ENCODE measurements at regions of chr6 and their contacts with region 1.

Region 1: GRCh38 chr6:45922728-45923351 is 92.8 kb downstream of the CLIC5 start:
- DNase-seq: peak; percentile 67
- ATAC-seq: peak; percentile 70
- H3K4me3 ChIP-seq: no peak overlapping the region
- H3K4me3 Mint-ChIP-seq: no peak overlapping the region
- H3K27ac ChIP-seq: no peak overlapping the region
- H3K27ac Mint-ChIP-seq: no peak overlapping the region
- H3K4me1 ChIP-seq: no peaks in the 10 kb centered on the region
- H3K4me1 Mint-ChIP-seq: peaks cover 3% of the 10 kb centered on the region
- H3K27me3 ChIP-seq: no peaks in the 10 kb centered on the region
- H3K27me3 Mint-ChIP-seq: peaks cover 9% of the 10 kb centered on the region
- CTCF ChIP-seq: peak; percentile 78

Region 2: GRCh38 chr6:44593539-44593944 is 1329.3 kb before region 1 on chr6:
- CTCF ChIA-PET with region 1: interaction called, 14 read pairs
- POLR2A ChIA-PET with region 1: no interaction called
- intact Hi-C with region 1: no loop called
- DNase-seq: peak; percentile 45
- ATAC-seq: no peak
- H3K4me3 ChIP-seq: no peak overlapping the region
- H3K4me3 Mint-ChIP-seq: no peak overlapping the region
- H3K27ac ChIP-seq: no peak overlapping the region
- H3K27ac Mint-ChIP-seq: no peak overlapping the region
- H3K4me1 ChIP-seq: no peaks in the 10 kb centered on the region
- H3K4me1 Mint-ChIP-seq: no peaks in the 10 kb centered on the region
- H3K27me3 ChIP-seq: peaks cover 0 to 4% (median 1%) of the 10 kb centered on the region in 4 experiments
- H3K27me3 Mint-ChIP-seq: peaks cover 24% of the 10 kb centered on the region
- CTCF ChIP-seq: peak; percentile 58

Region 3: DNA sequence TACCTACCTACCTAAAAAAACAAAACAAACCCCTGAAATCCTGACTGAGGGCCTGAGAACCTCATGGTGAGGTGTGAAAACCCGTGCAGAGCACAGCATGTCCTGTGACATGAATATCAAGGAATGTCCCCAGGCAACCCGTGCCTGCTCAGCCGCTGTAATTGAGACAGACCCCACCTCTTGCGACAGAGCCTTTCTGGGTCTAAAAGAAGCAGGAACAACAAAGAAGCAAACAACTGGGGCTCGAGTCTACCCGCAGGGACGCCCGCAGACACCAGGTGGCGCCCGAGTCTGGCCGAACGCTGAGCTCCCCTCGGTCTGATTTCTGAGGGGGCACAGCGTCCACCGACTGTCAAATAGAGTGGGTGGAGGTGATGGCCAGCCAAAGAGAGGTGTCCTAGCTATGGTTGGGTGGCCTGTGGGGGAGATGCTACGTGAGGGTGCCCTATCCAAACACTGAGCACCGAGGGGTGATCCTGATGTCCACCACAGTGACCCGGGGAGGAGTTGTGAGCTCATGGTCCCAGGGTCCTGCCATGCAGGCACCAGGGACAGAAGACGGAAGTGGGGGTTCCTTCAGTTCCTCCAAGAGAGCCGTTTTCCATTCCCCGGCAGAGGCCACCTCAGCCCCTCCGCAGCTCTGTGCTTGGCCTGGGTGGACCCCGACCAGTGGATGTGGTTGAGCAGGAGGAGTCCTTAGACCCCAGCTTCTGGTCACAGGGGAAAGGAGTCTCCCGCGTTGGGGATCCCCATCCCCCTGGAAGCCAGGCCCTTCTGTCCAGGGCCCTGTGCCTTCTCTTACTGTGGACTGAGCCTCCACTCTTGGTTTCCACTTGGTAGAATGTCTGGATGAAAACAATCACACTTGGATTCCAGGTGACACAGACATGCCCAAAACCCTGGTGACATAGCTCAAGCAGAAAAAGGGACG is 1267.2 kb before region 1 on chr6:
- CTCF ChIA-PET with region 1: interaction called, 334 read pairs
- POLR2A ChIA-PET with region 1: no interaction called
- intact Hi-C with region 1: no loop called
- DNase-seq: peak; percentile 66
- ATAC-seq: peak; percentile 51
- H3K4me3 ChIP-seq: no peak overlapping the region
- H3K4me3 Mint-ChIP-seq: no peak overlapping the region
- H3K27ac ChIP-seq: no peak overlapping the region
- H3K27ac Mint-ChIP-seq: no peak overlapping the region
- H3K4me1 ChIP-seq: no peaks in the 10 kb centered on the region
- H3K4me1 Mint-ChIP-seq: peaks cover 5% of the 10 kb centered on the region
- H3K27me3 ChIP-seq: peaks cover 0 to 13% (median 6%) of the 10 kb centered on the region in 4 experiments
- H3K27me3 Mint-ChIP-seq: peaks cover 39% of the 10 kb centered on the region
- CTCF ChIP-seq: peak; percentile 94

Region 4: GRCh38 chr6:45714741-45715507 is 207.9 kb before region 1 on chr6:
- CTCF ChIA-PET with region 1: interaction called, 13 read pairs
- POLR2A ChIA-PET with region 1: no interaction called
- intact Hi-C with region 1: loop called (anchors 5 kb)
- DNase-seq: peak; percentile 75
- ATAC-seq: peak; percentile 65
- H3K4me3 ChIP-seq: no peak overlapping the region
- H3K4me3 Mint-ChIP-seq: no peak overlapping the region
- H3K27ac ChIP-seq: no peak overlapping the region
- H3K27ac Mint-ChIP-seq: no peak overlapping the region
- H3K4me1 ChIP-seq: peaks cover 6 to 20% of the 10 kb centered on the region in 2 donors
- H3K4me1 Mint-ChIP-seq: peaks cover 22% of the 10 kb centered on the region
- H3K27me3 ChIP-seq: no peaks in the 10 kb centered on the region
- H3K27me3 Mint-ChIP-seq: no peaks in the 10 kb centered on the region
- CTCF ChIP-seq: peak; percentile 73

Region 5: GRCh38 chr6:46098678-46099077 is 175.8 kb after region 1 on chr6:
- CTCF ChIA-PET with region 1: no interaction called
- POLR2A ChIA-PET with region 1: no interaction called
- intact Hi-C with region 1: no loop called
- DNase-seq: no peak
- ATAC-seq: no peak
- H3K4me3 ChIP-seq: no peak overlapping the region
- H3K4me3 Mint-ChIP-seq: no peak overlapping the region
- H3K27ac ChIP-seq: no peak overlapping the region
- H3K27ac Mint-ChIP-seq: no peak overlapping the region
- H3K4me1 ChIP-seq: no peaks in the 10 kb centered on the region
- H3K4me1 Mint-ChIP-seq: no peaks in the 10 kb centered on the region
- H3K27me3 ChIP-seq: no peaks in the 10 kb centered on the region
- H3K27me3 Mint-ChIP-seq: no peaks in the 10 kb centered on the region
- CTCF ChIP-seq: no peak